Endothelial cell of umbilical vein (primary cell): ENCODE measurements at regions of chr19 and their contacts with region 1.

Region 1: DNA sequence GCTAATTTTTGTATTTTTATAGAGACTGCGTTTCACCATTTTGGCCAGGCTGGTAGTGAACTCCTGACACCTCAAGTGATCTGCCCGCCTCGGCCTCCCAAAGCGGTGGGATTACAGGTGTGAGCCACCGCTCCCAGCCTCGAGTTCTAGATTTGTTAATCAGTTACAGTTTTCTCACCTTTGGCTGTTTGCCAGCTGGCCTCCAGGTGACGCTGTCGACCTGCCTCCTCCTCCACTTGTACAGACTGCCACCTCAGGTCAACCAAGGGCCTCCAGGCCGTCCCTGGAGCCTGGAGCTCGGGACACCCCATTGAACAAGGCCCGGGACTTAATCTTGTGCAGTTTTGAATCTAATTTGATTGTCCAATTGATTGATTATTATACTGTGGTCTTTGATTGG is 45.5 kb downstream of the IER2 start:
- DNase-seq: no peak
- H3K4me3 ChIP-seq: no peak overlapping the region
- H3K27ac ChIP-seq: no peak overlapping the region
- H3K4me1 ChIP-seq: no peaks in the 10 kb centered on the region
- H3K27me3 ChIP-seq: no peaks in the 10 kb centered on the region
- CTCF ChIP-seq: no peak
- POLR2A ChIP-seq: no peak

Region 2: DNA sequence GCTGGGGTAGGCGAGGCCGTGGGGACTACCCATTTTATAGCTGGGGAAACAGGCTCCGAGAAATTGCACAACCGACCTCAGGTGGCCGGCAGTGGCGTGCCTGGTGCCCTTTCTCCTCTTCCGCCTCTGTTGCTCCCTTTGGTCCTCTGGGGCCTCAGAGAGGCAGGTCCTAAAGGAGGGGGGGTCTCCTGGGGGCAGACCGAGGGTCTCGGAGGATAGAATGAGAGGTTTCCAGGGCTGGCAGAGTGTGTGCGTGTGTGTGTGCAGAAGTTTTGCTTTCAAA is 56.8 kb before region 1 on chr19:
- CTCF ChIA-PET with region 1: no interaction called
- POLR2A ChIA-PET with region 1: no interaction called
- dilution Hi-C with region 1: no loop called
- intact Hi-C with region 1: no loop called
- DNase-seq: no peak
- H3K4me3 ChIP-seq: no peak overlapping the region
- H3K27ac ChIP-seq: no peak overlapping the region
- H3K4me1 ChIP-seq: no peaks in the 10 kb centered on the region
- H3K27me3 ChIP-seq: no peaks in the 10 kb centered on the region
- CTCF ChIP-seq: no peak
- POLR2A ChIP-seq: no peak

Region 3: DNA sequence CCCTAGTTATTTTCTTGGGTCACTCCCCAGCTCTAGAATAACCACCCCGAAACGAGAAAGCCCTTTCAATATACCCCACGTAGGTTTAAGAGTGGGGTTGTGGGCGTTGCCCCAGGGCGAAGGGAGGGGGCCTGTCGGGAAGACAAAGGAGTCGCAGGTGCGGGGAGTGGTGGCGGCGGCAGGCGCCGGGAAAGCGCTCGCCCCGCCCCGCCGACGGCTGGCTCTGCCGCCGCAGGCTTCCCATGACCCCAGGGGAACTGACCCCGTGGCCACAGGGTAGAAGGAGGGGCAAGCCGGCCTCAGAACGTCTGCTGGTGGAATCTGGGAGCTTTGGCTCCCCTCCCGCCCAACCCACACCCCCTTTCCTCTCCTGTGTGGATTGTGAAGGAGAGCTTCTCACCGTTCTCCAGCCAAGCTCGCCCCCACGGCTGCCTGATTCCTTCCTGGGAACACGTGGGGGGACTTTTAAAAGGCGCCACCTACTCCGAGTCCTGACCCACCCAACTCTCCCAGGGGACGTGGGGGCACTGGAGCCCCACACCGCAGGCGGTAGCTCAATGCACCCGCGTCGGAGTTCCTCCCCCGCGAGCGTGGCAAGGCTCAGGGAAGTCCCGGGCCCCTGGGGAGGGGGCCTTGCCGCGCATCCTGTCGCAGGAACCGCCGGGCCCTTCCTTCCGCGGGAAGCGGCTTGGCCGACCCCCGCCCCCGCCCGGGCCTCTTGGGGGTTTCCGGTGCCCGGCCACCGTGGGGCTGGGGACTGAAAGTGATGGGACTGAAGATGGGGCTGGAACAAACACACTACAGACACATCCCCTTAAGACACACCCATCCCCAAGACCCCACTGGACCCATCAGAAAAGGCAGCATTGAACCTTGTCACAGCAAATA is 40.0 kb before region 1 on chr19:
- CTCF ChIA-PET with region 1: interaction called, 7 read pairs
- POLR2A ChIA-PET with region 1: no interaction called
- dilution Hi-C with region 1: no loop called
- intact Hi-C with region 1: loop called (anchors 2 kb)
- DNase-seq: peak; percentile 72
- H3K4me3 ChIP-seq: peak overlapping the region; percentile 62 to 97 (median 67)
- H3K27ac ChIP-seq: peak overlapping the region; percentile 96
- H3K4me1 ChIP-seq: peaks cover 27% of the 10 kb centered on the region
- H3K27me3 ChIP-seq: no peaks in the 10 kb centered on the region
- CTCF ChIP-seq: no peak
- POLR2A ChIP-seq: no peak

Region 4: GRCh38 chr19:13215546-13216380 is 20.1 kb after region 1 on chr19:
- CTCF ChIA-PET with region 1: no interaction called
- POLR2A ChIA-PET with region 1: no interaction called
- dilution Hi-C with region 1: no loop called
- intact Hi-C with region 1: no loop called
- DNase-seq: no peak
- H3K4me3 ChIP-seq: no peak overlapping the region
- H3K27ac ChIP-seq: no peak overlapping the region
- H3K4me1 ChIP-seq: no peaks in the 10 kb centered on the region
- H3K27me3 ChIP-seq: no peaks in the 10 kb centered on the region
- CTCF ChIP-seq: no peak
- POLR2A ChIP-seq: no peak

Region 5: DNA sequence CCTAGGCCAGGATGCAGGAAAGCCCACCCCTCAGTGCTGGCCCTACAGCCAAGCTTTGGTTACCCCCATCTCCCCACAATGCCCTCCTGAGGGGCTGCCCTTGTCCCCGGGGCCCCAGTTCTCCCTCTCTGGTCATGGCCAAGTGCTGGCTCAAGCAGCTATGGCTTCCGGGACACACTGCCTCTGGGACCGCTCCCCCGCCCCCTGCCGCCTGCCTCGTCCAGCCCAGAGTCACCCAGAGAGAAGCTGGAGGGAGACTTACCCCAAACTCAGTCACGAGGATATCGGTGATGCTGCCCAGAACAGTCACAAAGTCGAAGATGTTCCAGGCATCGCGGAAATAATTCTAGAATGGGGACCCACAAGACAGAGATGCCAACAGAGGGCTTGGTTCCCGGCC is 49.2 kb after region 1 on chr19:
- CTCF ChIA-PET with region 1: interaction called, 6 read pairs
- POLR2A ChIA-PET with region 1: no interaction called
- dilution Hi-C with region 1: no loop called
- intact Hi-C with region 1: loop called (anchors 5 kb)
- DNase-seq: no peak
- H3K4me3 ChIP-seq: no peak overlapping the region
- H3K27ac ChIP-seq: no peak overlapping the region
- H3K4me1 ChIP-seq: peaks cover 3% of the 10 kb centered on the region
- H3K27me3 ChIP-seq: no peaks in the 10 kb centered on the region
- CTCF ChIP-seq: no peak
- POLR2A ChIP-seq: no peak